ENCODE measurements at regions of chr9 and their contacts with region 1.

Region 1: GRCh38 chr9:124868511-124869465 is 6.9 kb downstream of the ARPC5L start:
- DNase-seq: peak; percentile 92
- ATAC-seq: peak; percentile 54
- H3K4me3 Mint-ChIP-seq: peak overlapping the region; percentile 94
- H3K27ac Mint-ChIP-seq: peak overlapping the region; percentile 99
- H3K4me1 Mint-ChIP-seq: peaks cover 47% of the 10 kb centered on the region
- H3K27me3 Mint-ChIP-seq: no peaks in the 10 kb centered on the region
- CTCF ChIP-seq: peak; percentile 20

Region 2: DNA sequence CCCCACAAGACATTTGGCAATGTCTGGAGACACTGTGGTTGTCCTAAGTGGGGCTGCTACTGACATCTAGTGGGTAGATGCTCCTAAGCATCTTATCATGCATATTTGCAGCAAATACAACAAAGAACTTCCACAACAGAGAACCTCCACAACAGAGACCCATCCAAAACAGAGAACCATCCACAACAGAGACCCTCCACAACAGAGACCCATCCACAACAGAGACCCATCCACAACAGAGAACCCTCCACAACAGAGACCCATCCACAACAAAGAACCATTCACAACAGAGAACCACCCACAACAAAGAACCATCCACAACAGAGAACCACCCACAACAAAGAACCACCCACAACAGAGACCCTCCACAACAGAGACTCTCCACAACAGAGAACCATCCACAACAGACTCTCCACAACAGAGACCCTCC is 26.0 kb after region 1 on chr9:
- CTCF ChIA-PET with region 1: interaction called, 10 read pairs
- POLR2A ChIA-PET with region 1: interaction called, 6 read pairs
- intact Hi-C with region 1: no loop called
- DNase-seq: peak; percentile 58
- ATAC-seq: peak; percentile 84
- H3K4me3 Mint-ChIP-seq: no peak overlapping the region
- H3K27ac Mint-ChIP-seq: no peak overlapping the region
- H3K4me1 Mint-ChIP-seq: peaks cover 7% of the 10 kb centered on the region
- H3K27me3 Mint-ChIP-seq: peaks cover 2% of the 10 kb centered on the region
- CTCF ChIP-seq: peak; percentile 28

Measured in activated CD8-positive, alpha-beta T cell treated with anti-CD3 and anti-CD28 coated beads for 36 hours (primary cell).